Activated CD8-positive, alpha-beta T cell treated with anti-CD3 and anti-CD28 coated beads for 36 hours (primary cell): ENCODE measurements at regions of chr19 and their contacts with region 1.

Region 1: GRCh38 chr19:45770192-45771101 is 1.4 kb upstream of the SIX5 start:
- DNase-seq: peak; percentile 91
- ATAC-seq: peak; percentile 72
- H3K4me3 Mint-ChIP-seq: peak overlapping the region; percentile 80
- H3K27ac Mint-ChIP-seq: no peak overlapping the region
- H3K4me1 Mint-ChIP-seq: peaks cover 12% of the 10 kb centered on the region
- H3K27me3 Mint-ChIP-seq: peaks cover 16% of the 10 kb centered on the region
- CTCF ChIP-seq: peak; percentile 90

Region 2: GRCh38 chr19:45730389-45731288 is 39.8 kb before region 1 on chr19 and contains the start of gene FBXO46:
- CTCF ChIA-PET with region 1: interaction called, 18 read pairs
- POLR2A ChIA-PET with region 1: interaction called, 4 read pairs
- intact Hi-C with region 1: no loop called
- DNase-seq: peak; percentile 98
- ATAC-seq: peak; percentile 99
- H3K4me3 Mint-ChIP-seq: peak within 1 kb of the TSS; percentile 96
- H3K27ac Mint-ChIP-seq: peak within 1 kb of the TSS; percentile 94
- H3K4me1 Mint-ChIP-seq: peaks cover 24% of the 10 kb centered on the region
- H3K27me3 Mint-ChIP-seq: no peaks in the 10 kb centered on the region
- CTCF ChIP-seq: no peak
- total RNA-seq, gene FBXO46: 28.6 to 34.7 TPM

Region 3: DNA sequence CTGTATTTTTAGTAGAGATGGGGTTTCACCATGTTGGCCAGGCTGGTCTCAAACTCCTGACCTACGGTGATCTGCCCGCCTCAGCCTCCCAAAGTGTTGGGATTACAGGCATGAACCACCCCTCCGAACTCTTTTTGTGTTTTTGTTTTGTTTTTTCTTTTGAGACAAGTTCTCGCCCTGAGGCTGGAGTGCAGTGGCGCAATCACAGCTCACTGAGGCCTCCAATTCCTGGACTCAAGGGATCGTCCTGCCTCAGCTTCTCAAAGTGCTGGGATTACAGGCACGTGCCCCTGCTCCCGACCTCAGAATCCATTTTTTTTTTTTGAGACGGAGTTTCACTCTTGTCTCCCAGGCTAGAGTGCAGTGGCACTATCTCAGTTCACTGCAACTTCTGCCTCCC is 12.8 kb before region 1 on chr19:
- CTCF ChIA-PET with region 1: interaction called, 19 read pairs
- POLR2A ChIA-PET with region 1: interaction called, 7 read pairs
- intact Hi-C with region 1: no loop called
- DNase-seq: no peak
- ATAC-seq: no peak
- H3K4me3 Mint-ChIP-seq: no peak overlapping the region
- H3K27ac Mint-ChIP-seq: no peak overlapping the region
- H3K4me1 Mint-ChIP-seq: no peaks in the 10 kb centered on the region
- H3K27me3 Mint-ChIP-seq: no peaks in the 10 kb centered on the region
- CTCF ChIP-seq: no peak

Region 4: GRCh38 chr19:45792470-45793177 is 22.2 kb after region 1 on chr19 and contains the start of gene DMWD:
- CTCF ChIA-PET with region 1: interaction called, 124 read pairs
- POLR2A ChIA-PET with region 1: interaction called, 27 read pairs
- intact Hi-C with region 1: no loop called
- DNase-seq: peak; percentile 100
- ATAC-seq: peak; percentile 95
- H3K4me3 Mint-ChIP-seq: peak within 1 kb of the TSS; percentile 93
- H3K27ac Mint-ChIP-seq: peak within 1 kb of the TSS; percentile 87
- H3K4me1 Mint-ChIP-seq: peaks cover 28% of the 10 kb centered on the region
- H3K27me3 Mint-ChIP-seq: peaks cover 29% of the 10 kb centered on the region
- CTCF ChIP-seq: no peak
- total RNA-seq, gene DMWD: 23.5 to 26.0 TPM

Region 5: DNA sequence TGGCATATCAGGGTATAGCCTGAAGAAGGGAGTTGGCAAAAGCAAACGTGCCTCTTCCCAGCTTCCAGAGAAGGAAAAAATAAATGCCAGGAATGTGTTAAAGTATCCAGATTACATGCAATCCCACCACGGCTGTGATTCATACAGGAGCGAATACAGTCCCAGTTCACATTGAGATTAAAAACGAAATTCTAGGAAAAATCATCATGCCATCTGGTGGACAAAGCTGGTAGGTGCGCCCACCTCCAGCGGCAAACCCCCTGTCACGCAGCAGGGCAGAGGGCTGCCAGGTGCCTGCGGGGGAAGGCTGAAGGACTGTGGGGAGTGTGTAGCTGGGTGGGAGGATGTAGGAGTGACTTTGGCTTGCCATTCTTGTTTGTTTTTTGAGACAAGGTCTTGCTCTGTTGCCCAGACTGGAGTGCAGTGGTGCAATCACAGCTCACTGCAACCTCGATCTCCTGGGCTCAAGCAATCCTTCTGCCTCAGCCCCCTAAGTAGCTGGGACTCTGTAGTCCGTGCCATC is 28.6 kb after region 1 on chr19:
- CTCF ChIA-PET with region 1: interaction called, 124 read pairs
- POLR2A ChIA-PET with region 1: interaction called, 27 read pairs
- intact Hi-C with region 1: loop called (anchors 2 kb)
- DNase-seq: peak; percentile 69
- ATAC-seq: peak; percentile 91
- H3K4me3 Mint-ChIP-seq: no peak overlapping the region
- H3K27ac Mint-ChIP-seq: no peak overlapping the region
- H3K4me1 Mint-ChIP-seq: peaks cover 6% of the 10 kb centered on the region
- H3K27me3 Mint-ChIP-seq: peaks cover 30% of the 10 kb centered on the region
- CTCF ChIP-seq: peak; percentile 89

Region 6: DNA sequence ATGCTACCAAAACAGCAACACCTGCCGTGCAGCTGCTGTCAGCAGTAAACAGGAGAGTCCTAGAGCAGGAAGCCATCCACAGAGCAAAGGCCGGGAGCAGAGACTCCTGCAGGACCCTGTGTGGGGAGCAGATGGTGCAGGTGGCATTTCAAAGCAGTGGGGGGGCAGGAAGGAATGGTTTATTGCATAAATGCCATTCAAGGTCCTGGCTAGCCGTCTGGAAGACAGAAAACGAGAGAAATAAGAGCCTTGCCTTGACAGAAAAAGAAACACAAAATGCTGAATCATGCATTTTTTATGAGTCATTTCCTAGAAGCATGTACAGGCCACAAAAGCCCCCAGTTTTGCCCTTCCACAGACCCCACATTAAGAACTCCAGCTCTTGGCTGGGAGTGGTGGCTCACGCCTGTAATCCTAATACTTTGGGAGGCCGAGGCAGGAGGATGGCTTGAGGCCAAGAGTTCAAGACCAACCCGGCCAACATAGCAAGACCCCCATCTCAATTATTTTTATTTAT is 39.3 kb after region 1 on chr19:
- CTCF ChIA-PET with region 1: interaction called, 52 read pairs
- POLR2A ChIA-PET with region 1: interaction called, 3 read pairs
- intact Hi-C with region 1: no loop called
- DNase-seq: no peak
- ATAC-seq: peak; percentile 58
- H3K4me3 Mint-ChIP-seq: no peak overlapping the region
- H3K27ac Mint-ChIP-seq: no peak overlapping the region
- H3K4me1 Mint-ChIP-seq: peaks cover 6% of the 10 kb centered on the region
- H3K27me3 Mint-ChIP-seq: peaks cover 2% of the 10 kb centered on the region
- CTCF ChIP-seq: no peak